GM12878 (cell line): ENCODE measurements at regions of chr10 and their contacts with region 1.

Region 1: DNA sequence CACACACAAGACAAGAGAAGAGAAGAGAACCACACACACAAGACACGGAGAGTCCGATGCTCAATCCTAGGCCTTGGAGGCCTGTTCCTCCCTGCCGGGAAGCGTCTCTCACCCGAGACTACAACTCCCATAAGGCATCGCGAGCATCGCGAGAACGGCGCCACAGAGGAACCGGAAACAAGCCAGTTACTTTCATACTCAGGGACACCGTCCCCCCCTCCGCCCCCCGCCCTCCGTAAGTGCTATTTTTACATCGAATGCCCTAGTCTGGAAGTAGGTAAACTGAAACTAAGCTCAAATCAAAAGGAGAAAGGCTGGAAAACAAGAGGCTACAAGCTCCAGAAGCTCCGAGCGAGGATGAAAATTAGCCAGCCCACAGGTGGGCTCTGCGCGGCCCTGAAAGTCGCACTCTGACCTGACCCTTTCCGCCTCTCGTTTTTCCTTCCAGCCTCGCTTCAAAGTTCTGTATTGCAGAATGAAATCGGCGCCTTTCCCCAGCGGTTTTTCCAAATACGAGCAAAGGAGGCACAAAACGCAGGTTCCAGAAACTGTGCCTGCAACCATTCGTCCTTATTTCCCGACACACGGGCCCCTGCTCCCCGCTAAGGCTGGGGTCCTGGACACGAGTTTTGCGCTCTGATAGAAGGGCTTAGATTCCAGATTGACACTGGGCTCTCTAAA is 11.5 kb upstream of the DNAJC12 start:
- DNase-seq: peak; percentile 84
- ATAC-seq: peak; percentile 98
- H3K4me3 ChIP-seq: peak overlapping the region; percentile 82
- H3K27ac ChIP-seq: peak overlapping the region; percentile 98
- H3K4me1 ChIP-seq: no peaks in the 10 kb centered on the region
- H3K27me3 ChIP-seq: no peaks in the 10 kb centered on the region
- CTCF ChIP-seq: no peak
- EP300 ChIP-seq: no peak
- POLR2A ChIP-seq: peak; percentile 71
- RAD21 ChIP-seq: no peak

Region 2: GRCh38 chr10:67869996-67870395 is 20.5 kb after region 1 on chr10:
- CTCF ChIA-PET with region 1: no interaction called
- POLR2A ChIA-PET with region 1: interaction called, 3 read pairs
- RAD21 ChIA-PET with region 1: interaction called, 6 read pairs
- SMC1A ChIA-PET with region 1: interaction called, 17 read pairs
- in situ Hi-C with region 1: no loop called
- intact Hi-C with region 1: no loop called
- DNase-seq: no peak
- ATAC-seq: no peak
- H3K4me3 ChIP-seq: no peak overlapping the region
- H3K27ac ChIP-seq: no peak overlapping the region
- H3K4me1 ChIP-seq: no peaks in the 10 kb centered on the region; the same call in 1 of the 2 replicates
- H3K27me3 ChIP-seq: no peaks in the 10 kb centered on the region
- CTCF ChIP-seq: no peak
- EP300 ChIP-seq: no peak
- POLR2A ChIP-seq: no peak
- RAD21 ChIP-seq: no peak

Region 3: GRCh38 chr10:68074775-68075549 is 225.5 kb after region 1 on chr10 and contains the start of gene HERC4:
- CTCF ChIA-PET with region 1: interaction called, 4 read pairs
- POLR2A ChIA-PET with region 1: interaction called, 5 read pairs
- RAD21 ChIA-PET with region 1: no interaction called
- SMC1A ChIA-PET with region 1: interaction called, 4 read pairs
- in situ Hi-C with region 1: no loop called
- intact Hi-C with region 1: loop called (anchors 10 kb)
- DNase-seq: peak; percentile 64
- ATAC-seq: peak; percentile 93
- H3K4me3 ChIP-seq: peak within 1 kb of the TSS; percentile 89
- H3K27ac ChIP-seq: peak within 1 kb of the TSS; percentile 92
- H3K4me1 ChIP-seq: 0 out of 2 replicates have a peak, but pooled peaks cover 3% of the 10 kb centered on the region
- H3K27me3 ChIP-seq: no peaks in the 10 kb centered on the region
- CTCF ChIP-seq: no peak
- EP300 ChIP-seq: no peak
- POLR2A ChIP-seq: peak; percentile 97
- RAD21 ChIP-seq: no peak
- polyA plus RNA-seq, gene HERC4: 9.7 to 11.5 TPM

Region 4: DNA sequence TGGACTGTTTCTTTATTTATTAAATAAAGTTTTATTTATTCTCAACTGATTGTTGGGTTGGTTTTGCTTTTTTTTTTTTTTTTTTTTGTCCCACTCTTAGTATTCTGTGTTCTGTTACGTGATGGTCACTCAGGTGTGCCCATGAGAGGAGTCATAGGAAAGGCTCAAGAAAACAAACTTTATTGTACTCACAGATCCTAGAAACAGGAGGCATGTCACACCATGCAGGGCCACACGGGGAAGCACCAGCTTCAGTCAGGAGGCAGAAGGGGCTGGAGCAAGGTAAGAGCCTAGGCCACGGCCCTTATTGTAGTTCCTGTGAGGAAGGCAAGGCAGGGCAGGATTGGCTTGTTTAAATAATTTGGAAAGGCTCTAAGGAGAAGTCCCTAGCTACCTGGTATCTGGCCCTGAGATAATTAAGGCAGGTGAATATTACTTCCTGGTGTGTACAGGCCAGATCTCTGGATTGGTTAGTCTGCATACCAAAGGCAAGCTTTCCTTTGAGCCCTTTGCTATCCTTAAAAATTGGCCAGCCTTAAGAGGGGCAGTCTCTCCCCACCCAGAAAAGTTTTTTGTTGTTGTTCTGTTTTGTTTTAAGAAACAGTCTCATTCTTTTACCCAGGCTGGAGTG is 374.2 kb after region 1 on chr10:
- CTCF ChIA-PET with region 1: no interaction called
- POLR2A ChIA-PET with region 1: no interaction called
- RAD21 ChIA-PET with region 1: no interaction called
- SMC1A ChIA-PET with region 1: no interaction called
- in situ Hi-C with region 1: no loop called
- intact Hi-C with region 1: no loop called
- DNase-seq: no peak
- ATAC-seq: peak; percentile 71
- H3K4me3 ChIP-seq: no peak overlapping the region
- H3K27ac ChIP-seq: no peak overlapping the region
- H3K4me1 ChIP-seq: no peaks in the 10 kb centered on the region
- H3K27me3 ChIP-seq: no peaks in the 10 kb centered on the region
- CTCF ChIP-seq: no peak
- EP300 ChIP-seq: no peak
- POLR2A ChIP-seq: no peak
- RAD21 ChIP-seq: peak; percentile 28; the same call in 1 of the 2 replicates